Activated CD4-positive, alpha-beta T cell treated with anti-CD3 and anti-CD28 coated beads for 36 hours (primary cell): ENCODE measurements at regions of chr16 and their contacts with region 1.

Region 1: DNA sequence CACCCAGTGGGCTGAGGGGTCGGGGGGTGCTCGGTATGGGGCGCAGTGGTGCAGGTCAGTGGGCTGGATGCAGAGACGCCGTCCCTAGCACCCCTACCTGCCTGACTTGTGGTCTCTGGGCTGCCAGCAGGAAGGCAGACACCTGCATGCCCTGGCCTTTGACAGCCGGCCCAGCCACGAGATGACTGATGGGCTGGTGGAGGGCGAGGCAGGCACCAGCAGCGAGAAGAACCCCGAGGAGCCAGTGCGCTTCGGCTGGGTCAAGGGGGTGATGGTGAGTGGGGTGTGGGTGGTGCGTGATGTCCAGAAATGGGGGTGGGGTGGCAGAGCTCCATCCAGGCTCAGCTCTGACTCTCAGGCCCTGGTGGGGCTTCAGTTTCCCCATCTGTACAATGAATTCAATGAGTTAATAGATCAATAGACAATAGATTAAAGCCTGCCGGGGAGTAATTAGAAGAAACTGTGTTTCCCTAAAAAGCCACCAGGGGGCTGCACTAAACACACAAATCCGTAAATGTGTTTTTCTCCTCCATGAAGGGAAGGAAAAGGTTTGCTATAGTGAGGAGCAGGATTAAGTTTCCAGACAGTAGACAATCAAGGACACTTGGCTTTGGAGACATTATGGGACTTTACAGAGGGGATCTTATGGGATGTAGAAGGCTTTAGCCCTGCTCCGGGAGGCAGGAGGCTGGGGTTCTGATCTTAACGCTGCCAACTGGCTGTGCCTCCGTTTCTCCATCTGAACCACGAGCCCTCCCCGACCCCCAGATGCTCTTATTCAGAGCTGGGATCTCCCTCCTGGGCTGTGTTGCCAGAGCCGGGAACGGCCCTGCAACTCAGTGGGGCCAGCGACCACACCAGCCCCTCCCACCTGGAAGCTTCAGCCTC is 2.2 kb downstream of the SLC12A3 start:
- DNase-seq: peak; percentile 62
- ATAC-seq: peak; percentile 48
- H3K4me3 Mint-ChIP-seq: no peak overlapping the region
- H3K27ac Mint-ChIP-seq: no peak overlapping the region
- H3K4me1 Mint-ChIP-seq: peaks cover 3% of the 10 kb centered on the region
- H3K27me3 Mint-ChIP-seq: no peaks in the 10 kb centered on the region

Region 2: GRCh38 chr16:56950881-56951771 is 83.9 kb after region 1 on chr16:
- CTCF ChIA-PET with region 1: interaction called, 35 read pairs
- POLR2A ChIA-PET with region 1: no interaction called
- intact Hi-C with region 1: loop called (anchors 1 kb)
- DNase-seq: peak; percentile 85
- ATAC-seq: peak; percentile 94
- H3K4me3 Mint-ChIP-seq: no peak overlapping the region
- H3K27ac Mint-ChIP-seq: no peak overlapping the region
- H3K4me1 Mint-ChIP-seq: peaks cover 18% of the 10 kb centered on the region
- H3K27me3 Mint-ChIP-seq: no peaks in the 10 kb centered on the region

Region 3: DNA sequence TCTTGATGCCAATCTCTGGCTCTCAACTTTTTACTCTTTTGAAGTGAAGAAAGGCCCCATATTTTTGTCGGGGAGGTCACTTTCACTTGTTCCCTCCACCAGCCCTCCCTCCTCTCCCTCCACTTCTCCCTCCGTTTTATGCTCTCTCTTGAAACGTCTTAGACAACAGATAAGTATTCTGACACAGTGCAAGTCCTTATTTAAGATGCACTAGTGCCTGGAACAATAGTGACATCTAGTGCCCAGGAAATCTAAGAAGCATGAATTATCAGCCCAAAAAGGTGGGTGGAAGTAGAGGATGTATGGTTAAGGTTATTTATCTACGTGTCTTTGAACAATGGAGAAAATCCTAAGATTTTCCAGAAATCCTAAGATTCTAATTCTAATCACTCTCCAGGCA is 300.8 kb after region 1 on chr16:
- CTCF ChIA-PET with region 1: no interaction called
- POLR2A ChIA-PET with region 1: no interaction called
- intact Hi-C with region 1: loop called in 1 of 2 experiments (anchors 10 kb)
- DNase-seq: no peak
- ATAC-seq: peak; percentile 88
- H3K4me3 Mint-ChIP-seq: no peak overlapping the region
- H3K27ac Mint-ChIP-seq: no peak overlapping the region
- H3K4me1 Mint-ChIP-seq: no peaks in the 10 kb centered on the region
- H3K27me3 Mint-ChIP-seq: no peaks in the 10 kb centered on the region